ENCODE measurements at regions of chr21 and their contacts with region 1.

Region 1: GRCh38 chr21:38478782-38479181 is 19.5 kb downstream of the ERG start:
- DNase-seq: no peak
- ATAC-seq: peak in 1 of 2 donors; percentile 90

Region 2: GRCh38 chr21:38440746-38441145 is 38.0 kb before region 1 on chr21:
- intact Hi-C with region 1: loop called in 1 of 2 experiments (anchors 5 kb)
- DNase-seq: no peak
- ATAC-seq: no peak